ENCODE measurements at regions of chr15 and their contacts with region 1.

Region 1: GRCh38 chr15:64443747-64444621 is 16.4 kb upstream of the ZNF609 start:
- DNase-seq: no peak
- ATAC-seq: peak; percentile 69
- H3K4me3 Mint-ChIP-seq: peak overlapping the region; percentile 44
- H3K27ac Mint-ChIP-seq: peak overlapping the region; percentile 69
- H3K4me1 Mint-ChIP-seq: peaks cover 49% of the 10 kb centered on the region
- H3K27me3 Mint-ChIP-seq: no peaks in the 10 kb centered on the region

Region 2: GRCh38 chr15:64460206-64460734 is 16.3 kb after region 1 on chr15 and contains the start of gene ZNF609:
- CTCF ChIA-PET with region 1: interaction called, 7 read pairs
- POLR2A ChIA-PET with region 1: interaction called, 11 read pairs
- DNase-seq: peak; percentile 89
- ATAC-seq: peak; percentile 68
- H3K4me3 Mint-ChIP-seq: peak within 1 kb of the TSS; percentile 90
- H3K27ac Mint-ChIP-seq: peak within 1 kb of the TSS; percentile 89
- H3K4me1 Mint-ChIP-seq: peaks cover 68% of the 10 kb centered on the region
- H3K27me3 Mint-ChIP-seq: no peaks in the 10 kb centered on the region
- total RNA-seq, gene ZNF609: 39.9 to 40.5 TPM

Region 3: DNA sequence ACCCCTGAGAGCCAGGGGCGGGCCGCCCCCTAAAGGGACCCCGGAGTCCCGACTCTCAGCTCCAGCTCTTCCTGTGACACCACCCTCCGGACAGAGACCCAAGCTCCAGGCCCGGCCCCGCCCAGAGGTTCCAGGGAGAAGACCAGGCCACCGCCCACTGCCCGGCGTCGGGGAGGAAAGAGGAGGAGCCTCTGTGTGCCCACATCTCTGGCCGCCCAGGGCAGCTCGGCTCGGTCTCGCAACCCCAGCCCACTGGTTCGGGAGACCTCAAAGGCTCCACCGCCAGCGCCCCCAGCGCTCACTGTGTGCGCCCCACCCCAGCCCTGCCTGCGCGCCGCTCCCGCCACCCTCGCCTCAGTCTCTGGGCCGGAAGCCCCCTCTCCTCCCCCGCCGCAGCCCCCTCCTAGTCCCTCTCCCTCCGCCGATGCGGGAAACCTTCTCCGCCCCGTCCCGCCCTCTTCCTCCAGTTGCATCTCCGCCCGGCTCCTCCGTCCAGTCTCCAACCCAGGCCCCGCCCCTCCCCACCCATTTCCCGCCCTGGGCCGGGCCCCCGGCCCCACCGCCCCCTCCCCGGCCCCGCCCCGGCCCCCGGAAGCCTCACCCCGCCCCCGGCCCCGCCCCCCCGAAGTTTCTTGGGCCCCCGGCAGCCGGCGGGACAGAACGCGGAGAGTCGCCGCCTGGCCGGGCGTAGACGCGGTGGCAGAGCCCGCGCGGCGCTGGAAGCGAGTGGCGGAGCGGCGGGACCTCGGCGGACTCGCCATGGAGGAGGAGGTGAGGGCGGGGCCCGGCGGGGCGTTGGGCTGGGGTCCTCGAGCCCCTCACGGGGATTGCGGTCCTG is 397.5 kb after region 1 on chr15 and contains the start of gene PLEKHO2:
- CTCF ChIA-PET with region 1: no interaction called
- POLR2A ChIA-PET with region 1: no interaction called
- DNase-seq: peak; percentile 98
- ATAC-seq: peak; percentile 79
- H3K4me3 Mint-ChIP-seq: peak within 1 kb of the TSS; percentile 90
- H3K27ac Mint-ChIP-seq: peak within 1 kb of the TSS; percentile 90
- H3K4me1 Mint-ChIP-seq: peaks cover 77% of the 10 kb centered on the region
- H3K27me3 Mint-ChIP-seq: no peaks in the 10 kb centered on the region
- total RNA-seq, gene PLEKHO2: 25.8 to 26.4 TPM

Measured in activated CD8-positive, alpha-beta T cell treated with anti-CD3 and anti-CD28 coated beads, Interleukin-2, amount 10 ng/mL, durations not matched to agents 7 days and 5 days (primary cell).